ENCODE measurements at regions of chr5 and their contacts with region 1.

Region 1: DNA sequence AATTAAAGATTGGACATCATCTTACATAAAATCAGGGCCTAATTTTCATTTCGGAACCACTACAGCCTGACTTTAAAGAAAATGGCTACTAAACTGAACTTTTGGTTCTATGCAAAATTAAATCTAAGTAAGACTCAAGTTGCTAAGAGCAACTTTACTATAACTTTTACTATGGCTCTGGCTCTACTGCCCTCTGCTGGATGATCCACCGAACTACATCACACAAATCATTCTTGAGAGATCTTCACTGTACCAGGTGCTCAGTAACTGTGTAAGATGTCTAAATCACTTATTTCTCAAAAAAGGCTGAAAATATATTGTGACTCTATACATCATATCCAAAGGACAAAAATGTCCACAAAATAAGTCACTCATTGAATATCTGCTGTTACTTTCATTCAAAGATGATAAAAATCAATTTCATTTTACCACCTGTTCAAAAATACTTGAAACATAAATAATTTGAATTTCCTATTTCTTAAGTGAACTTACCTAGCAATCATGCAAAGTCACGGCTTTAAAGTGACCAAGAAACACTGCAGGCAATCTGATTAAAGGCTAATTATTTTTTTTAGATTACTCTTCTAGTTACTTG is 13.5 kb downstream of the MOCS2 start:
- DNase-seq: peak in 2 of 3 donors; percentile 37 to 51
- ATAC-seq: peak in 1 of 2 donors; percentile 73
- H3K4me3 ChIP-seq: no peak overlapping the region
- H3K27ac ChIP-seq: no peak overlapping the region
- H3K4me1 ChIP-seq: no peaks in the 10 kb centered on the region
- H3K27me3 ChIP-seq: no peaks in the 10 kb centered on the region

Region 2: GRCh38 chr5:52948418-52949076 is 147.5 kb before region 1 on chr5:
- intact Hi-C with region 1: loop called (anchors 2 to 10 kb)
- DNase-seq: peak; percentile 23 to 51 (median 27)
- ATAC-seq: peak; percentile 91 to 95
- H3K4me3 ChIP-seq: no peak overlapping the region
- H3K27ac ChIP-seq: no peak overlapping the region
- H3K4me1 ChIP-seq: no peaks in the 10 kb centered on the region
- H3K27me3 ChIP-seq: no peaks in the 10 kb centered on the region

Region 3: DNA sequence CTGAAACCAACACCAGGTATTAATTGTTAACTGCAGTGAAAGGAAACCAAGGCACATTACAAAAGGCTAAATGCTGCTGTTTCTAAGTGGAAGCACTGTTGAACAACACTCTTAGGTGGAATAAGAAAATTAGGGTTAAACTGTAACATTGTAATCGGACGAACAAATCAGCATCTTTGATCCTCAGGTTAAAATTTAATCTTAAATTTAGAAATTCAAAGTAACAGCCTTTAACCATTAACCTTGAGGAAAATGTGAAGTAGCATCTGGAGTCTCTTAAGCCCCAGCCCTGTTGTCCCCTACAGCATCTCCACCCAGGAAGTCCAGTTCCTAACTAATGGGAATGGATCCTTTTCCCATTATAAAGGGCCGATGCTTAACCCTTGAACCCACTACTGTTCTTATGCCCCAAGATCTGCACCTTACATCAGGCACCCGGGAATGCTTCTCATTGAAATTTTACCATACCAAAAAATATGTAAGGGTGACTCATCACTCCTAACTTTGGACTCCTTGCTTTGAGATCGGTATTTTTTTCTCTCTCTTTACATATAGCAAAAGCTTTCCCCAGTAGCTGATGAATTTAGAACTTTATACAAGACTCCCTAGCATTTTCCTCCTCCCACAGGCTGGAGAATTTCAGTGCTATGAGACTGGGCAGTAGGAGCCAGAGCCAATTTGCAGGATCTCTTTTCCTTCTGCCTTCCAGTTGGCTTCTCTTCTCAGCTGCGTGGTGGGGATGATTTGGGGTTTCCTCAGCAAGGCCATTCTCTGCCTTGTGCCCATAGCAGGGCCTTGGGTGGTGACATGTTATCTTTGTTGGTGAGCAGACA is 138.9 kb before region 1 on chr5:
- intact Hi-C with region 1: loop called in 1 of 4 experiments (anchors 10 kb)
- DNase-seq: no peak
- ATAC-seq: no peak
- H3K4me3 ChIP-seq: no peak overlapping the region
- H3K27ac ChIP-seq: no peak overlapping the region
- H3K4me1 ChIP-seq: no peaks in the 10 kb centered on the region
- H3K27me3 ChIP-seq: no peaks in the 10 kb centered on the region